Right ventricle myocardium inferior (tissue), 1 donor: ENCODE measurements at regions of chr5 and their contacts with region 1.

Region 1: DNA sequence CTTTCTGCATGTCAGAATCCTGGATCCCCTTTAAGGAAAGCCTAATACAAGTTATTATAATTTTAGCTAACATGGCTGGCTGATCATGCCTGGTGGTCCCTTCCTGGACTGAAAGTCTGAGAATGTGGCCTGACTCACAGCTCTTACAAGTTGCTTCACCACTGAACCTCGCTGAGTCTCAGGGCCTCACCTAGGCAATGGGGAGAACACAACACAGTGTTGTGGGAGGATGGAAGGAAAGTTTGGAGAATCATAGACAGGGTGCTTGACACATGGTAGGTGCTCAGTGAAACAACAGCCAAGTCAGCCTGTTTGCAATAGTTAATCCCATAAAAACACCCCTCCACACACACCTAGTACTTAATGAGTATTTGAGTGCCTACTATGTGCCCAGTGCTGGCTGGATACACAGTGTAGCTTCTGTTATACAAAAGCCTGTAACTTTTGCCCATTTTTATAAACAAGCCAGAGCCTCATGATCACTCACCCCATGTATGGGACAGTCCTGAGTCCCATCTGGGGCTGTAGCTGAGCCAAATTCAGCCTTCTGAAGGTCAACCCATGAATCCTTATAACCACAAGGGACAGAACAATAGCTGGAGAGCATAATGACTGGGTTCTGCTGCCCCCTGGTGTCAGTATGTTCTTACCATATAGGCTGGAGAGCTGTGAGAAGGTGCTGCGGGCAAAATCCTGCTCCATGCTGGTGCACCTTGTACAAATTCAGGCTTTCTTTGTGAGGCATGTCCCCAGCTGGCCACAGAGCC is 3.9 kb downstream of the ACSL6 start:
- DNase-seq: peak; percentile 72
- ATAC-seq: peak; percentile 70

Region 2: DNA sequence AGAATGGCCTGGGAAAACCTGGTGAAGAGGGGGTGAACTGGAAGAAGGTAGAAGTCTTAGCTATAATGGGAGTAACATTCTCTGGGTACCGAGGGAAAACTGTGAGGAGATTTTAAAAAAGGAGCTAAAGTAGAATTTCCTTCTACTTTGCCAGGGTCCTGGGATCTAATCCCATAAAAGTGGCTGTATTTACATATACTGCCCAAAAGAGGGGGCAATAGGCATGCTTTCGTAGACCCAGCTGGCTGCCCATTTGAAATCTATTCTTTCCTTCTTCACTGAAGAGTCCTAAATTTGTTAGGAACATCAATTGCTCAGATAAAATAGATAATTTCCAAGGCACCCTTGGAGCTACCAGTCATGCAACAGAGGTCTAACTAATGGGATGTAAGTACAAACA is 584.5 kb before region 1 on chr5:
- intact Hi-C with region 1: loop called (anchors 10 kb)
- DNase-seq: no peak
- ATAC-seq: no peak

Region 3: DNA sequence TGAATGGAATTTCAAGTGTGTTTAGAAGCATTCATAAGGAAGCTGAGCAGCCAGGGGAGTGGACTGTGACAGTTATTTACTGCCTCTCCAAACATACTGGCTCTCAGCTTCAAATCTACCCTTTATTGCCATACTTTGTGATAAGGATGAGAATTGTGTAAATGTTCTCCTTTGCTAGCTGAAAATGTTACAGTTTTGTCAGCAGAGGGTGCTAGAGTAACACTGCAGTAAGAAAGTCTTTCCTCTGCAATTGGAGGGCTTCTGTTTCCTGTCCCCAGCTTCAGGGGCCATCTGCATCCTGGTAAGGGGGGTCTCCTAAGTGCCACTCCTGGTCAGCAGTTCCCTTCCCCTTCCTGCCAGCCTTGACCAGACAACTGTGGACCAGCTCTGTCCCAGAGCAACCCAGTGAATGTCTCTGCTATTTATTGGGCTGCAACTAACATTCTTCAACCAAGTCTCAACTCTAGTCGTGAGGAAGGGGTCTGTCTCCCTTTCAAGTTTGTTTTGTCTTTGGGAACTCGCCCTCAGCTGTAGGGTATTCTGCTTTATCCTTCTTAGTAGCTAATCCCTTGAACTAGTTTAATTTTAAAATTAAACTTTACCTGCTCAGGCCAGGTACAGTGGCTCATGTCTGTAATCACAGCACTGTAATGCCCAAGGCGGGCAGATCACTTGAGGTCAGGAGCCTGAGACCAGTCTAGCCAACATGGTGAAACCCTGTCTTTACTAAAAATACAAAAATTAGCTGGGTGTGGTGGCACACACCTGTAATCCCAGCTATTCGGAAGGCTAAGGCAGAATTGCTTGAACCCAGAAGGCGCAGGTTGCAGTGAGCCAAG is 417.9 kb before region 1 on chr5:
- intact Hi-C with region 1: loop called (anchors 2 kb)
- DNase-seq: no peak
- ATAC-seq: peak; percentile 62

Region 4: DNA sequence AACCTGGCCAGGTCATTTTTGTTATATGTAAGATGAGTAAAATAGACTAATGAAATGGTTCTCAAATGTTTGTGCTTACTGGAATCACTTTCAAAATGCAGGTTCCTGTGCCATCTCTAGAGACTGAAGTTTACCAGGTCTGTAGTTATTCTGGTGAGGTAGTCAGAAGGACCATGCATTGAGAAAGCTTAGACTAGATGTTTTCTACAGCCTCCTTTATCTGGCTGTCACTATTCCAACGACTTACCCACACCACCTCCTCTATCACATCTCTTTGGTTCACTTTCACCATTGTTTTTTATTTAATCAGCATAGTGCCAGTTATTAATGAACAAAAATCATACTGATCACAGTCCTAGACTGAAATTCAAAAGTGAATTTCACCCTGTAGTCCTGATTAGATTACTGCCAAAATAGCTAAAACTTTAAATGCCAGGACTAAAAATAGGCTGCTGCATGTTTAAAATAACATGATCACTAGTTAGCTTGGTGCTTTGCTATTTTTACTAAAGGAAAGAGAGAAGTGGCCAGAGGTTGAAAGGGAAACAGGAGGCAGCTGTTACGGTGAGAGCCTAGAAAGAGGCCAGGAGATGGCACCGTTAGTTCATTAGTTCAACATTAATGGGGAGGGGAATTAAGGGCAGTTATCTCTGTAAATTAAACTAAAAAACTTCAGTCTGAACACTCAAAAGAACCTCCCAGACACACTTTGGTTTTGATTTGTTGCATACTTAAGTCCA is 196.9 kb before region 1 on chr5:
- intact Hi-C with region 1: loop called (anchors 2 kb)
- DNase-seq: no peak
- ATAC-seq: peak; percentile 77

Region 5: DNA sequence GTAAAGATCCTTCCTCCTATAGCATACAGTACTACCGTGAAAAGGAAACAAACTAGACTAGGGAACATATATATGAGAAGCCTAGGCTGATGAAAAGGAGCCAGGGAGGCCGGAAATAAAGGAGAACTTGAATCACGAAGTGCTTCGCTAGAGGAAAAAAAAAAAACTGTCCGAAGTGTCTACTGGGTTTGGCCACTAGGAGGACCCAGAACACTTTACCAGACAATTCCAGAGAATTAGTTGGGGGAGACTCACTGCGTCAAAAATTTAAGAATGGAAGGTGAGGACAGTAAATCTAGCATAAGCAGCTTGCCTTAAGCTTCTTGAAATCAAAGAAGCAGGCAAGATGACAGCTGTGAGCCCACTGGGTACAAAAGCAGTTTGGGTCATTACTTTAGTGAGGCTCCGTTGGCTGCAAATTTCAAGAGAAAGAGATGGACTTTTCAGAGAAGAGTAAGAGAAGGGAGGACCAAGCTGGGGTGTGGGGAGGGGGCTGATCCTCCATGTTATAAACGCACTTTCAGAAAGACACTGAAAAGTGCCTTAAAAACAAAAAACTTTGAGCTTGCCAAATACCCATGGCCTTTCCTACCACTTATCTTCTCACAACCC is 172.7 kb after region 1 on chr5:
- intact Hi-C with region 1: no loop called
- DNase-seq: no peak
- ATAC-seq: peak; percentile 42